Naive thymus-derived CD4-positive, alpha-beta T cell (primary cell): ENCODE measurements at regions of chr2 and their contacts with region 1.

Region 1: GRCh38 chr2:197159661-197160211 is 150.8 kb downstream of the ANKRD44 start:
- DNase-seq: no peak
- ATAC-seq: peak; percentile 81
- H3K4me3 ChIP-seq: no peak overlapping the region
- H3K4me3 Mint-ChIP-seq: peak overlapping the region in 5 of 10 donors; percentile 1 to 20 (median 10)
- H3K27ac ChIP-seq: peak overlapping the region; percentile 9
- H3K27ac Mint-ChIP-seq: peak overlapping the region; percentile 59 to 98 (median 78)
- H3K4me1 ChIP-seq: peaks cover 43 to 48% of the 10 kb centered on the region in 2 donors
- H3K4me1 Mint-ChIP-seq: peaks cover 61 to 86% (median 79%) of the 10 kb centered on the region in 7 donors
- H3K27me3 ChIP-seq: no peaks in the 10 kb centered on the region
- H3K27me3 Mint-ChIP-seq: no peaks in the 10 kb centered on the region

Region 2: DNA sequence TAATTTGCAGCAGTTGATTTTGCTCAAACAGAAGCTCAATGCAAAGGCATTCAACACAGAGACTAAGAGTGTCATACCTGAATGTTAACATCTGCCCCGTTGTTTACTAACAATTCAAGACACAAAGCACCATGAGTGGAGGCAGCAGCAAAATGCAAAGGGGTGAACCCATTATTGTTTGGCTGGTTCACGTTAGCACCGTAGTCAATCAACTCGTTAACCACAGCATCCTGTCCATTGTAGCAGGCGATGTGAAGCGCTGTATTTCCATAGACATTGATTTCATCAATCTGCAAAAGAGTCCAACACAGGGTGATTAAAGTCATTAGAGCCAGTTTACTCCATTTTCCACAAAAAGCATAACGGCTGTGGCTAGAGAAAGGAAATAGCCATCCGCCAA is 38.5 kb before region 1 on chr2:
- CTCF ChIA-PET with region 1: no interaction called
- POLR2A ChIA-PET with region 1: interaction called, 3 read pairs
- intact Hi-C with region 1: loop called in 1 of 2 experiments (anchors 2 kb)
- DNase-seq: peak in 1 of 9 donors; percentile 33
- ATAC-seq: peak; percentile 66
- H3K4me3 ChIP-seq: no peak overlapping the region
- H3K4me3 Mint-ChIP-seq: peak overlapping the region in 9 of 10 donors; percentile 4 to 69 (median 45)
- H3K27ac ChIP-seq: peak overlapping the region; percentile 36
- H3K27ac Mint-ChIP-seq: peak overlapping the region; percentile 56 to 90 (median 86)
- H3K4me1 ChIP-seq: peaks cover 12 to 20% of the 10 kb centered on the region in 2 donors
- H3K4me1 Mint-ChIP-seq: peaks cover 33 to 79% (median 71%) of the 10 kb centered on the region in 7 donors
- H3K27me3 ChIP-seq: no peaks in the 10 kb centered on the region
- H3K27me3 Mint-ChIP-seq: no peaks in the 10 kb centered on the region